Heart left ventricle (tissue), 16 donors: ENCODE measurements at regions of chr21 and their contacts with region 1.

Region 1: GRCh38 chr21:46515109-46515508 is 56.4 kb downstream of the DIP2A start:
- DNase-seq: peak; percentile 40 to 81 (median 69)
- ATAC-seq: peak; percentile 58 to 69 (median 62)
- H3K4me3 ChIP-seq: no peak overlapping the region
- H3K27ac ChIP-seq: peak overlapping the region in 2 of 12 donors; percentile 9 to 23
- H3K4me1 ChIP-seq: peaks cover 0 to 25% (median 12%) of the 10 kb centered on the region in 12 donors
- H3K27me3 ChIP-seq: no peaks in the 10 kb centered on the region
- CTCF ChIP-seq: no peak
- POLR2A ChIP-seq: no peak

Region 2: DNA sequence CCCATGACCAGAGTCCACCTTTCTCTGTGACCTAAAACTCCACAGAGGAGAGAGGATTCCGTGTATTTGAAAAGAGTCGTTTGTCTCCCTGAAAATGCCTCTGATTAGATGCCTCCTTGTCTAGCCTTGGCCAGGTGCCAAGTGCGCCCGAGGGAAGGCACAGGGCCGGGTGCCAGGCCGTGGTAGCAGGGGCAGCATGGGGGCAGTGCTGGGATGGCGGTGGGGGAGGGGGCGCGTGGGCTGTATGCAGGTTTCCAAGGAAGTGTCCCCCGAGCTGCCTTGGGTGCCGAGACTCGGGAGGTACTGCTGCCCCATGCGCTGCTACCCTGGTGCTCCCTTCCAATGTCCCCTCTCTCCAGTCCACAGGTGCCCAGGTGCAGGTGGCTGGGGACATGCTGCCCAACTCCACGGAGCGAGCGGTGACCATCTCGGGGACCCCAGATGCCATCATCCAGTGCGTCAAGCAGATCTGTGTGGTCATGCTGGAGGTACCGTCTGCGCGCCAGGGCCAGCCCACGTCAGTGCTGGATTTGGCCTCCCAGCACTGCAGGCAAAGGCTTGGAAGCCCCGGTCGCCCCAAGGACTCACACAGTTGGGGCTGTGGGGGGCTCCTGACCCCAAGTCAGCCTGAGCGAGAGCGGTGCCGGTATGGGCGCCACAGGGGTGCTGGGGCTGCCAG is 604.4 kb before region 1 on chr21:
- intact Hi-C with region 1: no loop called
- DNase-seq: peak in 3 of 5 donors; percentile 23 to 62 (median 26)
- ATAC-seq: peak in 2 of 4 donors; percentile 9 to 11
- H3K4me3 ChIP-seq: no peak overlapping the region
- H3K27ac ChIP-seq: no peak overlapping the region
- H3K4me1 ChIP-seq: peaks cover 0 to 7% (median 0%) of the 10 kb centered on the region in 12 donors
- H3K27me3 ChIP-seq: no peaks in the 10 kb centered on the region
- CTCF ChIP-seq: no peak
- POLR2A ChIP-seq: no peak

Region 3: GRCh38 chr21:46458315-46459023 is 56.6 kb before region 1 on chr21 and contains the start of gene DIP2A:
- intact Hi-C with region 1: loop called in 1 of 10 experiments (anchors 5 kb)
- DNase-seq: peak; percentile 96 to 99 (median 98)
- ATAC-seq: peak; percentile 95 to 98 (median 96)
- H3K4me3 ChIP-seq: peak within 1 kb of the TSS; percentile 77 to 100 (median 97)
- H3K27ac ChIP-seq: peak within 1 kb of the TSS; percentile 92 to 100 (median 96)
- H3K4me1 ChIP-seq: peaks cover 3 to 74% (median 47%) of the 10 kb centered on the region in 12 donors
- H3K27me3 ChIP-seq: no peaks in the 10 kb centered on the region
- CTCF ChIP-seq: peak in 2 of 12 donors; percentile 17 to 27
- POLR2A ChIP-seq: peak; percentile 87 to 98
- total RNA-seq, gene DIP2A: 17.1 to 31.9 (median 22.6) TPM